ENCODE measurements at regions of chr10 and their contacts with region 1.

Region 1: DNA sequence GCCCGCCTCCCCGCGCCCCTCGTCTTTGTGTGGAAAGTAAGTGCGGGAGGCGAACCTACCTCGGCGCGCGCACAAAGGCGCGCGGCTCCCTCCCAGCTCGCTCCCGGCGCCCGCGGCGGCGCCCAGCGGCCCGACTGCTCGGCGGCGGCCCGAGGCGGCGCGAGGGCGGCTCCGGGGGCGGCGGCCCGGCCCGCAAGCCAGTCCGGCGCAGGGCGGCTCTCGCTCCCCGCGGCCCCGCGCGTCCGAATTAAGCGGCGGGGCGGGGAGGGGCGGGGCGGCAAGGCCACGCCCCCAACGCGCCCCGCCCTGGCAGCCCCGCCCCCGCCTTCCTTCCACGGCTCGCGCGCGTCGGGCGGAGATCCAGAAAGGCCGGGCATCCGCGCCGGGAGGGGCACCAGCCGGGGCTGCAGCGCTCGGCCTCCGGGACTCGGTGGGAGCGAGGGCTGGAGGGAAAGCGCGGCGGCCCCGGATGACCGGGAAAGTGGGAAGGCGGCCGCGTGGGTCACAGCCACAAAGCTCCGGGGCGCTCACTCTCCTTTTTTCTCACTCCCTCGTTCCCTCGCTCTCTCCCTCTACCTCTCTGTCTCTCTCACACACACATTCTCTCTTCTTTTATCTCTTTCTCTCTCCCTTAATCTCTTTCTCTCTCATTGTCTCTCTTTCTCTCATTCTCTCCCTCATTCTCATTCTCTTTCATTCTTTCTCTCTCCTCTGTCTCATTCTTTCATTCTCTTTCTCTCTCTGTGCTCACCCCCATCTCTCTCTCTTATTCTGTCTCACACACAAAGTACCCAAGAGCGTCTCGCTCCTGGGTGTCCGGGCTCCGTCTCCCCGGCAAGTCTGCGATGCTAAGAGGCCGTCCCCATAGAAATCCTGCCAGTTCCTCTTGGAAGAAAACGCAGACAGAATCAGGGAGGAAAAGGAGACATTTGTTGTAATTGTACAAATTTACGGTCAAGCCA is 170.2 kb downstream of the FAM107B start:
- DNase-seq: peak; percentile 52 to 92
- H3K4me3 ChIP-seq: peak overlapping the region; percentile 37
- CTCF ChIP-seq: no peak
- POLR2A ChIP-seq: no peak

Region 2: GRCh38 chr10:14556285-14556956 is 48.0 kb before region 1 on chr10:
- intact Hi-C with region 1: loop called (anchors 1 kb)
- DNase-seq: peak in 1 of 2 donors; percentile 19
- H3K4me3 ChIP-seq: no peak overlapping the region
- CTCF ChIP-seq: no peak
- POLR2A ChIP-seq: no peak

Region 3: DNA sequence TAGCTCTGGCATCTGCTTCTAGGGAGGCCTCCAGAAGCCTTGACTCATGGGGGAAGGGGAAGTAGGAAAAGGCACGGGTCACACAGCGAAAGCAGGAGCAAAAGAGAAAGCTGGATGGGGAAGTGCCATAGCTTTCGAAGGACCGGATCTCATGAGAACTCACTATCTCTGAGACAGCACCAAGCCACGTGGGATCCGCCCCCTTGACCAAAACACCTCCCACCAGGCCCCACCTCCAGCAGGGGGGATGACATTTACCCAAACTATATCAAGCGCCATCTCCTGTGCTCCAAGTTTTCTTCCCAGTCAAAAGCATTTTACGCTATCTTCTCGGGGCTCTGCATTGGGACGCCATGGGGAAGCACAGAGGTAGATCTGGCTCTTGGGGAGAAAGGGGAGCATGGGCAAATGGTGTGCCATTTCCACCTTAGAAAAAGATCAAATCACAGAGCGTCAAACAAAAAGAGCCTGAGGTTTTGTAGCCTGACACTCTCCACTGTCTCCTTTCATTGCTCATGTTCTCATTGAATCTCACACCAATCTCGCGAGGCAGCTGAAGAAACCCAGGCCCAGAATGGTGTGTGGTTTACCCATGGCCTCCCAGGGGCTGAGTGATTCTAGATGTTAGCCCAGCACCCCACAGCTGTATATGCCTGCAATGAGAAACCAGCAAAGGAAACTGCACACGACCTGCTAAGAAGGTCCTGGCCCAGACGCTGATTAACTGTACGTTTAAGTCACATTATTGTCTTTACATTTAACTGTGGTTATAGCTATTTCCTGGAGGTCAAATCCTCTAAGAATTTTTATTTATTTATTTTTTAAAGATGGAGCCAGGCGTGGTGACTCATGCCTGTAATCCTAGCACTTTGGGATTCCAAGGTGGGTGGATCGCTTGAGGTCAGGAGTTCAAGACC is 431.2 kb after region 1 on chr10:
- intact Hi-C with region 1: no loop called
- DNase-seq: no peak
- H3K4me3 ChIP-seq: no peak overlapping the region
- CTCF ChIP-seq: no peak
- POLR2A ChIP-seq: no peak

Measured in lower leg skin (tissue), 4 donors.